OCI-LY7 (cell line): ENCODE measurements at regions of chr11 and their contacts with region 1.

Region 1: DNA sequence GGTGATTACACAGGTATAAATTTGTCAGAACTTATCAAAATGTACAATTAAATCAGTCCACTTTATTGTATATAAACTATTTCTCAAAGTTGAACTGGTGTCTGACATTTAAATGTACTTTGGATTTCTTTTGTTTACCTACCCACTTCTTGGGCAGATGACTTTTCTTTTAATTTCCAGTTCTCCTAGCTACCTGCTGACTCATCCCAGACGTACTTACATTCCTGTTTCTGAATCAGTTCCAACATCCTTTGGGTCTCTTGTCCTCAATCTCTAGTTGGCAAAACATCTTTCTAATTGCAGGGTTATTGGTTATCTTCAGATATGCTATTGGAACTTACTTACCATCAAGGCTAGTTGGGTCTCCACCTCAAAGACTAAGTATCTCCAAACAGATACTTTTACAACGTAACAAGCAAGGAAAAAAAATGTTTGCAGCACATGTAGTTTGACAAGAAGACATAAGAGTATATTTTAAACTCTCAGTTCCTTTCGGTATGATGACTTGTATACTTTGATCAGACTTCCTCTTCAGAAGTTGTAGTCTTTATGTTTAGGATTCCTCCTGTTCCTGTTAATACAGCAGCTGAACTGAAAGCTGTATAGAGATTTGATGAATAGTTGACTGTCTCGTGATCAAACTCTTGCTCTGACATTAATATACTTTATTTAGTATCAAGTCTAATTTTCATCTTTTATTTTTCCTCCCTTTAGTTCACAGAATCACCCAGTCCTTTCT is 43.2 kb downstream of the PACS1 start:
- DNase-seq: no peak
- H3K4me3 ChIP-seq: peak overlapping the region; percentile 56
- H3K27ac ChIP-seq: peak overlapping the region; percentile 53
- H3K4me1 ChIP-seq: peaks cover 67% of the 10 kb centered on the region
- CTCF ChIP-seq: no peak

Region 2: GRCh38 chr11:66081505-66081904 is 31.8 kb before region 1 on chr11:
- CTCF ChIA-PET with region 1: interaction called, 4 read pairs
- POLR2A ChIA-PET with region 1: interaction called, 19 read pairs
- intact Hi-C with region 1: no loop called
- DNase-seq: peak; percentile 92
- H3K4me3 ChIP-seq: peak overlapping the region; percentile 52
- H3K27ac ChIP-seq: peak overlapping the region; percentile 82
- H3K4me1 ChIP-seq: peaks cover 86% of the 10 kb centered on the region
- CTCF ChIP-seq: no peak

Region 3: GRCh38 chr11:66100272-66101065 is 12.8 kb before region 1 on chr11:
- CTCF ChIA-PET with region 1: interaction called, 3 read pairs
- POLR2A ChIA-PET with region 1: interaction called, 11 read pairs
- intact Hi-C with region 1: no loop called
- DNase-seq: peak; percentile 86
- H3K4me3 ChIP-seq: peak overlapping the region; percentile 53
- H3K27ac ChIP-seq: peak overlapping the region; percentile 69
- H3K4me1 ChIP-seq: peaks cover 56% of the 10 kb centered on the region
- CTCF ChIP-seq: no peak

Region 4: DNA sequence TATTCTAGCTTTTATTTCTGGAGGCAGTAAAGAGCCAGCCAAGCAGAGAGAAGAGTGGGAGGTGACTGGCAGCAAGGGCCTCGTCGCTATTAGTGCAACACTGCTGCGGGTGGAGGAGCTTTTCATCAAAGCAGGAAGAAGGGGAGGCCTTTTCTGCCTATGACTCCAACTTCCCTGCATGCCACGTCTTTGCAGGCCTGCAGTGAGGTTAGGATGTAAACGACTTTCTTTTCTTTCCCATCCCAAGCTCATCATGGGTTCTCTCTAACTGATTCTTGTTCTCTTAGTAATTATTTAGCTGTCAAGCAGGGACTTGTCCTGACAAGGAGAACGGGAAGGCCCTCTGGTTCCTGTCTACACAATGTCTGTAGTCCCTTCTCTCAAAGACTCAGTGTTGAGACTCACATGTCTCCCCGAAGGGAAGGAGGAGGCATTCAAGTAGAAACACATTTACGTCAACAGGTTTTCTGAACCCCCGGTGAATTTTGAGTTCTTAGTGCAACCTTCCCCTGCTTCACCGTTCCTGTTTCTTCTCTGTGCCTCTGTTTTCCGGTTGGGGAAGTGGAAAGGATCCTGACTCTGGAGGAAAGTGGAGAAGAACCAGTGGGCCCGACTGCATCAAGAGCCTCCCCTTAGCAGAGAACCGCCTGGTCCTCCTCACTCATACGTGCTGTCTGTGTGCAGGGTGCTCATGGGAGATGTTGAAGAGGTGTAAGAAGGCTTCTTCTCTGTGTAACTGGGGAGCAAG is 13.7 kb after region 1 on chr11:
- CTCF ChIA-PET with region 1: interaction called, 4 read pairs
- POLR2A ChIA-PET with region 1: interaction called, 48 read pairs
- intact Hi-C with region 1: no loop called
- DNase-seq: peak; percentile 78
- H3K4me3 ChIP-seq: peak overlapping the region; percentile 55
- H3K27ac ChIP-seq: peak overlapping the region; percentile 90
- H3K4me1 ChIP-seq: peaks cover 75% of the 10 kb centered on the region
- CTCF ChIP-seq: 0 out of 2 replicates have a peak, but pooled peaks have one; percentile 4